H1 (cell line): ENCODE measurements at regions of chr15 and their contacts with region 1.

Region 1: GRCh38 chr15:92545996-92546395 is 109.6 kb downstream of the FAM174B start:
- DNase-seq: no peak
- H3K4me3 ChIP-seq: no peak overlapping the region
- H3K27ac ChIP-seq: no peak overlapping the region
- H3K4me1 ChIP-seq: no peaks in the 10 kb centered on the region
- H3K27me3 ChIP-seq: no peaks in the 10 kb centered on the region
- CTCF ChIP-seq: no peak
- EP300 ChIP-seq: no peak
- POLR2A ChIP-seq: no peak
- RAD21 ChIP-seq: no peak

Region 2: GRCh38 chr15:92531406-92531805 is 14.6 kb before region 1 on chr15:
- CTCF ChIA-PET with region 1: interaction called, 13 read pairs
- POLR2A ChIA-PET with region 1: no interaction called
- DNase-seq: no peak
- H3K4me3 ChIP-seq: no peak overlapping the region
- H3K27ac ChIP-seq: no peak overlapping the region
- H3K4me1 ChIP-seq: no peaks in the 10 kb centered on the region
- H3K27me3 ChIP-seq: no peaks in the 10 kb centered on the region
- CTCF ChIP-seq: no peak
- EP300 ChIP-seq: no peak
- POLR2A ChIP-seq: no peak
- RAD21 ChIP-seq: no peak

Region 3: DNA sequence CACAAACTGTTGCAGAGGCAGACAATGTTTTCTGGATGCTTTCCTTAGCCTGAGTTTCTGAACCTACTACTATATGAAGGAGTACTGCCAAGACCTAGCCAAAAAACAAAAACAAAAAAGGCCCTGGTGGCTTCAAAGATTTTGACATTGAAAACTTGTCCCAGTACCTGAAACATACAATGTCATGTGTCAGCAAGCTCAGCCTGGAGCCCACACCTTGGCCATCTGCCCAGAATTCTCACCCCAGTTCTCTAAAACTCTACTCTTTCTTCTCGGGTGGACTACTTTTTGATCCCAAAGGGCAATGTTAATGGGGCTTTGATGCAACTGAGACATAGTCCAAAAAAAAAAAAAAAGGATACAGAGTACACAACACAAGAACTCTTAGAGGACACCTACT is 28.2 kb after region 1 on chr15:
- CTCF ChIA-PET with region 1: no interaction called
- POLR2A ChIA-PET with region 1: no interaction called
- DNase-seq: no peak
- H3K4me3 ChIP-seq: no peak overlapping the region
- H3K27ac ChIP-seq: no peak overlapping the region
- H3K4me1 ChIP-seq: no peaks in the 10 kb centered on the region
- H3K27me3 ChIP-seq: no peaks in the 10 kb centered on the region
- CTCF ChIP-seq: no peak
- EP300 ChIP-seq: no peak
- POLR2A ChIP-seq: no peak
- RAD21 ChIP-seq: no peak